ENCODE measurements at regions of chr18 and their contacts with region 1.

Region 1: DNA sequence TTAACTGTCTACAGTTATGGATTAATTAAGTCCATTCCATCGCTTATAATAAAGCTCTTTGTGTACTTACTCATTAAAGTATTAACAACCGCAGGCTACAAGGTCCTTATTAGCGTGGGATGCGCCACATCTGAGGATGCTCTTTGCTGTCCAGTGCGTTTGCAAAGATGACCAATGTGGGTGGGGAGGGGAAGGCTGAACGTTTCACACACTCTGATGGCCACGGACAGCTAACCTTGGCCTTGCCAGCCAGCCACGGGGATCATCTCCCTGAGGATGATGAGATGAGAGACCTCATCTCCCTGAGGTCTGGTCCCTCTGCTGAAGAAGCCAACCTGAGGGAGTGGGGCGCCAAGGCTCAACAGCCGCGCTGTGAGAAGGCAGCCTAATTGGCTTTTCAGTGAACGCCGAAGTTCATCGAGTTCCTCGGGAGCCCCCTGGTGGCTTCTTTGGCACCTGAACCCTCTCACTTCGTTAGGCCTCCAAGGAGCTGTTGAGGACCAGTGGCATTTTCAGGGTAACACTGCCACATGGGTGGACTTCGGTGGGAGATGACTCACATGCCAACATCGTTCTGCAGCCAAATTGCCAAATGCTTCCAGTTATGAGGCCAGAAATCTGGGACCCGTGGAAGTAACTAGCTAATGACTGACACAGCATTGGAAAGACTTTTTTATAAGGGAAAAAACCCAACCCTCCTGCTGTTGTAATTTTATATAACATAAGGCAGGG is 69.3 kb upstream of the SEC11C start:
- DNase-seq: peak; percentile 81
- ATAC-seq: peak; percentile 78
- H3K4me3 Mint-ChIP-seq: no peak overlapping the region
- H3K27ac Mint-ChIP-seq: no peak overlapping the region
- H3K4me1 Mint-ChIP-seq: no peaks in the 10 kb centered on the region
- H3K27me3 Mint-ChIP-seq: no peaks in the 10 kb centered on the region

Region 2: GRCh38 chr18:58781627-58782194 is 288.6 kb before region 1 on chr18:
- CTCF ChIA-PET with region 1: interaction called, 63 read pairs
- DNase-seq: peak; percentile 76
- ATAC-seq: peak; percentile 78
- H3K4me3 Mint-ChIP-seq: no peak overlapping the region
- H3K27ac Mint-ChIP-seq: no peak overlapping the region
- H3K4me1 Mint-ChIP-seq: no peaks in the 10 kb centered on the region
- H3K27me3 Mint-ChIP-seq: no peaks in the 10 kb centered on the region

Region 3: DNA sequence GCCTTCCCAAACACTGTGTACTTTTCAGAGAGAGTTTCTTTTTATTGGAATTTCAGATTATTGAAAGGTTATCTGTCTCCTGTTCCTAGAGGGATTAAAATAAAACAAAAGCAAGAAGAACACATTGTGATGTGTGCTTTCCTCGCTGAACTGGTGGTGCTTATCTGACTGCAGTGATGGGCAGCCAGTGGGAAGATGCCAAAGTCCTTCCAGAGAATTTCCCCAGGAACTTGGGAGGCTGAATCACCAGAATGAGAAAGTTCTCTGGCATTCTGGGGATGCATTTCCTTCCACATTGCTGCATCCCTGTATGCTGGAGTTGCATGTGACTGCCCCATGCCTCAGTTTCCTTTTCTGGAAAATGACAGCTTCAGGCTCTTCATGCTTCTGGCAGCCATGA is 15.4 kb after region 1 on chr18:
- CTCF ChIA-PET with region 1: interaction called, 11 read pairs
- DNase-seq: no peak
- ATAC-seq: no peak
- H3K4me3 Mint-ChIP-seq: no peak overlapping the region
- H3K27ac Mint-ChIP-seq: no peak overlapping the region
- H3K4me1 Mint-ChIP-seq: peaks cover 4% of the 10 kb centered on the region
- H3K27me3 Mint-ChIP-seq: peaks cover 14% of the 10 kb centered on the region